Upper lobe of right lung (tissue), 1 donor: ENCODE measurements at regions of chr7 and their contacts with region 1.

Region 1: GRCh38 chr7:1473864-1474512 is 14.7 kb upstream of the MICALL2 start:
- DNase-seq: peak; percentile 93
- ATAC-seq: peak; percentile 85
- H3K4me3 ChIP-seq: no peak overlapping the region
- H3K27ac ChIP-seq: no peak overlapping the region
- H3K4me1 ChIP-seq: peaks cover 4% of the 10 kb centered on the region
- H3K27me3 ChIP-seq: no peaks in the 10 kb centered on the region
- CTCF ChIP-seq: peak; percentile 94

Region 2: GRCh38 chr7:786472-787255 is 687.3 kb before region 1 on chr7:
- intact Hi-C with region 1: no loop called
- DNase-seq: peak; percentile 85
- ATAC-seq: peak; percentile 92
- H3K4me3 ChIP-seq: no peak overlapping the region
- H3K27ac ChIP-seq: no peak overlapping the region
- H3K4me1 ChIP-seq: no peaks in the 10 kb centered on the region
- H3K27me3 ChIP-seq: no peaks in the 10 kb centered on the region
- CTCF ChIP-seq: peak; percentile 76

Region 3: DNA sequence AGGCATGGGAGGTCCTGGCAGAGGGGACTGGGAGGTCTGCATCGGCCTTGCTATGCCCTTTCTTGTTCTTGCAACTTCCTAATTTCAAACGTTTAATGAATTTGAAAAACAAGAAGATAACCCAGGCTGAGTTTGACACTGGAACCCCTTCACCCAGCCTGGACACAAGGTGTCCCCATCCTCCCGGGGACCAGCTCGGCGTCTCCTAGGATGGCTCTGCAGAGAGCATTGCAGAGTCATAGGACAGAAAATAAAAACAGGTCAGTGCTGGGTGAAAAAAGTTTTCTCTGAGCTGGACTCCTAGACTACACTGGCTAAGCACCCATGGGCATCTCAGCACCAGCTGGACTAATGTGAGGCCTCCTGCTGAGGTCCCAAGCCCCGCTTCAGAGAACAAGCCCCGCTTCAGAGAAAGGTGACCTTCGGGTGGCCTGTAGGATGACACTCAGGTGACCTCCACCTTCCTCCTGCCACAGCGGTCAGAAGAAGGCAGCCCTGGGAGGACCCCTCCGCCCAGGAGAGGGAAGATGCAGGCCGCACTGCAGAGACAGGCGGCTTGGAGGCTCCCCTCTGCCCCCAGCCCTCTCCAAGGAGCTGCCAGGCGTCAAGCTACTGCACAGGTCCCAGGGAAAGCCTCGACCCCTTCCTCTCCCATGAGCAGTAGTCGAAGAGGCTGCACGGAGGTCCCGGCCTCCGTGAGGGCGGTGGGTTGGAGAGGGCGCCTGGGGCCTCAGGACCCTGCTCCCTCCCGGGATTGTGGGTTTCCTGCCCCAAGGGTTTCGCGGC is 250.6 kb before region 1 on chr7:
- intact Hi-C with region 1: loop called (anchors 5 kb)
- DNase-seq: no peak
- ATAC-seq: no peak
- H3K4me3 ChIP-seq: no peak overlapping the region
- H3K27ac ChIP-seq: no peak overlapping the region
- H3K4me1 ChIP-seq: peaks cover 4% of the 10 kb centered on the region
- H3K27me3 ChIP-seq: peaks cover 93% of the 10 kb centered on the region
- CTCF ChIP-seq: no peak